ENCODE measurements at regions of chr6 and their contacts with region 1.

Region 1: GRCh38 chr6:158220786-158221442 is 52.8 kb downstream of the GTF2H5 start:
- DNase-seq: peak; percentile 76 to 82
- ATAC-seq: peak; percentile 78 to 97 (median 94)
- H3K4me3 ChIP-seq: no peak overlapping the region
- H3K27ac ChIP-seq: no peak overlapping the region
- H3K4me1 ChIP-seq: peaks cover 0 to 7% (median 0%) of the 10 kb centered on the region in 9 donors
- H3K27me3 ChIP-seq: no peaks in the 10 kb centered on the region
- CTCF ChIP-seq: peak; percentile 92 to 99 (median 96)

Region 2: DNA sequence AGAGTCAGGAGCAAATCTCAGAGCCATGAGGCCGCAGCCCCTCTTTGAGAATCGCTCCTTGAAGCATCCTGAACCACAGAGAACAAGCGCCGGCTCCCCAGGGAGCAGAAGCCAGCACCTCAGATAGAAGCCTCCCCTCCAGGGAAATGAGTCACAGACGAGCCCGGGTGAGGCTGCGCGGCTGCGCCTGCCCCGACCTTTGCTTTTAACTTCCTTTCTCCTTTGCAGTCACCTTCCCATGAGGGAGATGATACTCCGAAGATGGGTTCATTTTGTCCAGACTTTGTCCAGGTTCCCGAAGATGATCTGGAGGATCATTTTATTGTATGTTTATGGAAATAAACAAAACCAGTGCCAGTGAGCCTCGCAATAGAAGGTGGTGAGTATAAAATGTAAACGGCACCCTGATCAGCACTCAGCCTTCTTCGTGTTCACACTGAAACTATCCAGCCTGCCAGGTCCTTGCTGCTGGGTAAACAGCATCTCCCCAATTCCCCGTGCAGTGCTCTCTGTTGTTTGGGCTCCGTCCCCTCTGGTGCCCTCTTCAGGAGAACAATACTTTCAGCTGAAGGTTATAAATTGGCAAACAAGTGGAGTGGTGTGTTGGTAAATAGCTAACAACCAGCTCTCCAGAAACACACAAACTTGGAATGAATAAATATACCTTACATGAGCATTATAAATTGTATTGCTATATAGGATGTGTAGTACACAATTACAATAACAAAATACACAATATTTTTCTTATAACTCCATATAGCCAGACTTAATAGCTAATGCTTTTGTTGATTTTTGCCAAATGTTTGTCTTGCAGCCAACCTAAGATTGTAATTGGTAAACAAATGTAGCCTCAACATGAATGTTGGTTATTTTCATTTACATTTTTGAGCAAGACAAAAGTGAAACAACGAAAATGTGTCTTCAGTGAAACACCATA is 297.5 kb after region 1 on chr6:
- intact Hi-C with region 1: loop called in 9 of 10 experiments (anchors 2 to 10 kb)
- DNase-seq: peak; percentile 38 to 48
- ATAC-seq: peak in 6 of 8 donors; percentile 61 to 80 (median 70)
- H3K4me3 ChIP-seq: peak overlapping the region in 4 of 10 donors; percentile 4 to 28 (median 22)
- H3K27ac ChIP-seq: no peak overlapping the region
- H3K4me1 ChIP-seq: peaks cover 0 to 19% (median 13%) of the 10 kb centered on the region in 9 donors
- H3K27me3 ChIP-seq: peaks cover 0 to 61% (median 45%) of the 10 kb centered on the region in 7 donors
- CTCF ChIP-seq: peak; percentile 5 to 68 (median 53)

Region 3: GRCh38 chr6:158599635-158600034 is 378.7 kb after region 1 on chr6:
- intact Hi-C with region 1: loop called in 5 of 10 experiments (anchors 2 to 10 kb)
- DNase-seq: no peak
- ATAC-seq: no peak
- H3K4me3 ChIP-seq: no peak overlapping the region
- H3K27ac ChIP-seq: no peak overlapping the region
- H3K4me1 ChIP-seq: no peaks in the 10 kb centered on the region
- H3K27me3 ChIP-seq: no peaks in the 10 kb centered on the region
- CTCF ChIP-seq: no peak

Region 4: DNA sequence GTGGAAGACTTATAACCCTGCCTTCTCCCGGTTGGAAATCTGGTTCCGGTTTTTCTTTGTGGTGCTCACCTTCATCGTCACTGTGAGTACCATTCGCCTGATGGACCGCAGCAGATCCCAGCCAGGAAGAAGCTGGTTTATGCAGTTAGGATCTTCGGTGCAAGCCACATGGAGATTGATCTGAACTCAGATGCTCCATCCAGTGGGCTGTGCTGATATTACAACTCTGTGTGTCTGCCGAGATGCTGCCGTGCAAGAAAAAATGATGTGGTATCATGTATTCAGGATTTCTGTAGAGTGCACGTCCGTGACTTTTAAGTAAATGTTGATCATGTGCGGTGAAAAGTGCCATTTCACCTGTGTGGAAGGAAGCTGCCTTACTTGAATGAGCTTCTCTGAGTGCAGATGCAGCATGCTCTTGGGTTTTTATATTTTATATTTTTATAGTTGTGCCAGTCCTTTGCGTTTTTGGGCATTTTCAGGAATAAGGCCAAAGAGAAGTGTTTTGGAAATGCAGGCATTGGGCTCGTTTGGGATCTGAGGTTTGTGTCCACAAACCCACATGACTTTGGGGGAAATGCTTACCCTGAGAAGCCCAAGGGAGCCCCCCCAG is 384.5 kb after region 1 on chr6:
- intact Hi-C with region 1: loop called in 9 of 10 experiments (anchors 2 to 10 kb)
- DNase-seq: peak in 1 of 2 donors; percentile 65
- ATAC-seq: peak in 4 of 8 donors; percentile 53 to 70 (median 66)
- H3K4me3 ChIP-seq: no peak overlapping the region
- H3K27ac ChIP-seq: no peak overlapping the region
- H3K4me1 ChIP-seq: peaks cover 0 to 18% (median 8%) of the 10 kb centered on the region in 9 donors
- H3K27me3 ChIP-seq: no peaks in the 10 kb centered on the region
- CTCF ChIP-seq: peak; percentile 46 to 81 (median 73)

Region 5: DNA sequence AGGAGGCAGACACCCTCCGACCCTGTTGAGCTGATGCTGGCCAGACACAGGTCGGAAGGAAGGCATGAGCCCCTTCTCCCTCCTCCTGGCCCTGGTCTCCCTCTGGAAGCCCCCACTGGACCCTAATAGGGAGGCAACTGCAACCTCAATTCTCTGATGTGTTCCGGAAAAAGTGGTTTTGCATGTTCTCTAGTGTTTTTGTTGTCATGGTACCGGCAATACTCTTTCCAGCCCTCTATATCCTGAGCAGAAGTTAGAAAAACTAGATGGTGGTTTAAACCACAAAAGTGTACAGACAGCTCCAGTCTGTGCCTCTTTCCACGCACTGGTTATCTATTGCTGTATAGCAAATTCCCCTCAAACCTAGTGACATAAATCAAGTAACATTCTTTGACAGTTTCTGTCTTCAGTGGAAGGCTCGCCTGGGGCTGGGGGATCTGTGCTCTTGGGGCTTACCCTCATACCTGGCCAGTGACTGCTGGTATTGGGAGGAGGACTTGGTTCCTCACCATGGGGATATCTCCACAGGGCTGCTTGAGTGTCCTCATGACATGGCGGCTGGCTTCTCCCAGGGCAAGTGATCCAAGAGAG is 466.0 kb after region 1 on chr6:
- intact Hi-C with region 1: loop called in 8 of 10 experiments (anchors 5 to 10 kb)
- DNase-seq: no peak
- ATAC-seq: peak in 5 of 8 donors; percentile 33 to 64 (median 44)
- H3K4me3 ChIP-seq: no peak overlapping the region
- H3K27ac ChIP-seq: peak overlapping the region in 1 of 10 donors; percentile 55
- H3K4me1 ChIP-seq: peaks cover 0 to 36% (median 0%) of the 10 kb centered on the region in 9 donors
- H3K27me3 ChIP-seq: no peaks in the 10 kb centered on the region
- CTCF ChIP-seq: no peak

Region 6: DNA sequence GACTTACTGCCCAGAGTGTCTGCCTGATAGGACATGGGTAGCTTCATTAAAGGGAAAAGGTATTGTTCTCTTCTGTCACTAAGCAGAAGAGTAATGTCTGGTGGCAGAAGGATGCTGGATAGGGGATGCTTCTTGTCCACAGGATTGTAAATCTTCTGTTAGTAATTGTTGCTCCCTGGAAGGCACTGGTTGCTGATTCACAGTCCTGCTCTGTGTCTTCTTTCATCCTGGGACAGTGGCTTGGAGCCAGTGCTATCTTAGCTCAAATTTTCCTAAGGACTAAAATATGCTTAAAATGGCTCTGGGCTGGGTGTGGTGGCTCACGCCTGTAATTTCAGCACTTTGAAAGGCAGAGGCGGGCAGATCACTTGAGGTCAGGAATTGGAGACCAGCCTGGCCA is 476.9 kb after region 1 on chr6:
- intact Hi-C with region 1: loop called in 6 of 10 experiments (anchors 5 to 10 kb)
- DNase-seq: no peak
- ATAC-seq: no peak
- H3K4me3 ChIP-seq: no peak overlapping the region
- H3K27ac ChIP-seq: no peak overlapping the region
- H3K4me1 ChIP-seq: no peaks in the 10 kb centered on the region
- H3K27me3 ChIP-seq: no peaks in the 10 kb centered on the region
- CTCF ChIP-seq: no peak

Measured in heart right ventricle (tissue), 16 donors.